ENCODE measurements at regions of chrX and their contacts with region 1.

Region 1: GRCh38 chrX:45849253-45849862 is 648.7 kb upstream of the DIPK2B start:
- DNase-seq: no peak
- H3K4me3 ChIP-seq: peak overlapping the region; percentile 25
- H3K27ac ChIP-seq: no peak overlapping the region
- H3K4me1 ChIP-seq: peaks cover 7% of the 10 kb centered on the region
- H3K27me3 ChIP-seq: peaks cover 12% of the 10 kb centered on the region
- CTCF ChIP-seq: peak; percentile 39

Region 2: GRCh38 chrX:45515262-45516215 is 333.8 kb before region 1 on chrX:
- intact Hi-C with region 1: loop called (anchors 10 kb)
- DNase-seq: no peak
- H3K4me3 ChIP-seq: no peak overlapping the region
- H3K27ac ChIP-seq: no peak overlapping the region
- H3K4me1 ChIP-seq: no peaks in the 10 kb centered on the region
- H3K27me3 ChIP-seq: no peaks in the 10 kb centered on the region
- CTCF ChIP-seq: peak; percentile 67

Region 3: GRCh38 chrX:45540181-45540580 is 309.2 kb before region 1 on chrX:
- intact Hi-C with region 1: no loop called
- DNase-seq: no peak
- H3K4me3 ChIP-seq: no peak overlapping the region
- H3K27ac ChIP-seq: no peak overlapping the region
- H3K4me1 ChIP-seq: no peaks in the 10 kb centered on the region
- H3K27me3 ChIP-seq: no peaks in the 10 kb centered on the region
- CTCF ChIP-seq: no peak